ENCODE measurements at regions of chr6 and their contacts with region 1.

Region 1: DNA sequence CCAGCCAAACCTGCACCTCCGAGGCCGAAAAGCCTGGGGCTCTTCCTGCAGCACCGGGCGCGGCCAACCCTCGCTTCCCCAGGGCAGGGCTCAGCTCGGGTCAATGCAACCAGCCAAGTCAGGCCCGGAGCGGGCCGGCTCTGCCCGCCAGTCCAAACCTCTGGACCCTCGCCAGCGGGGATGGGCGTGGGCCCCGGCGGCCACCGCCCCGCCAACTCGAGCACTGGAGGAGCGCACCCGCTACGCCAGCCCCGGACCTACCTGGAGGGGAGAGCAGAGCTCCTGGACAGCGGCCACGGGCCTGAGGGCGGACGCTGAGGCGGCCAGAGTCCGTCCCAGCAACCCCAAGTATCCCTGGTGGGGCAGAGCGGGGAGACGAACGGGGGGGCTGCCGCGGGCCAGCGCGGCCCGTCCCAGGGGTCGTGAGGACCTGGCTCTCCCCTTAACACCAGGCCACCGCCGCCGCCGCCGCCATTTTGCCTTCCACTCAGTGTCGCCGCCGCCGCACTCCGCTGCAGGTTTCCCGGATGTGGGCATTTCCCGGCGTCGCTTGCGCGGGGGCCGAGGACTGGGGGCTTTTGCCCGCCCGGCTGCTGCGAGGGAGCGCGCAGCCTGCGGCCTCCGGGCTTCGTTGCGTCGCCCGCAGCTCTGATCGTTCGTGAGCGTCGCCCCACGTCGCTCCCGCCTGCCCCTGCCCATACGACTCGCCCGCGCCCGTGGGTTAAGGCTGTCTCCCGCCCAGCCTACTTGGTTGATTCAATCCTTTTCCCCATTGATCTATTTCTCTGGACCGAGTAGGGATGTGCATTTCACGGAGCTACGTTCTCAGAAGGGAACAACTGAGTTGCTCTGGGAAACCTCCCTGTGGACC is at the start of gene LATS1:
- DNase-seq: peak; percentile 83 to 94 (median 91)
- ATAC-seq: peak; percentile 94
- H3K4me3 Mint-ChIP-seq: peak within 1 kb of the TSS; percentile 86 to 98 (median 93)
- H3K27ac Mint-ChIP-seq: peak within 1 kb of the TSS; percentile 95 to 98 (median 97)
- H3K4me1 Mint-ChIP-seq: peaks cover 12 to 51% (median 36%) of the 10 kb centered on the region in 4 donors
- H3K27me3 Mint-ChIP-seq: no peaks in the 10 kb centered on the region
- polyA plus RNA-seq, gene LATS1: 6.8 to 14.2 (median 14.1) TPM

Region 2: DNA sequence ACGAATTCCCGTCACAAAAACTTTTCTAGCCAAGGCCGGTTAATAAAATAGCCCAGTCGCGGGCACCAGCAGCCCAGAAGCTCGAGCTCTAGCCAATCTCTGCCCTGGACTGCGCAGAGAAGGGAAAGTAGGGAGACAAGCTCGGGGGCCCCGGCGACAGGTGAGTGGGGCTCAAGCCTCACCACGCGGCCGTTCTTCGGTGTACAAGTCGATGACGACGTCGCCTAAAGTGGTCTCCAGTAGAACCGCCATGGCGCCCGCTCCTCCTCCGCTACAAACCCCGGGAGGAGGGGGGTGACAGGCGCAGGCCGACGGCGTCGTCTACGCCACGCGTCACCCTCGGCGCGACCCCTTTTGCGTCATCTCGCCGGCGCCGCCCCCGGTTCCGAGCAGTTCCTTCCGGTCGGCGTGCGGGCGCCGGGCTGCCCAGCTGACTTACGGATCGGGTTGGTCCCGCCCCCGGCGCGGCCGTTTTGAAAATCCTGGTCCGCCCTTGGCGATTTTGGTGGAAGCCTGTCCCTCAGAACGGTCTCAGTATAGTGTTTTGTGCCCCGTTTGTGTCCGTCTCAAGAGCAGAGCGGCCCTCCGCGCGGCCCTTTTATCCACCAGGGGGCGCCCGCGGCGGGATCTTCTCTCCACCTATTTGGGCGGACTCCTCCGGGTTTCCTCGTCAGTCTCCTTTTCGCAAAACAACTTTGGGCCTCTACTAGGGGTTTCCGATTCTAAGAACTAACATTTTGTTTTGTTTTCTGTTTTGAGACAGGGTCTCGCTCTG is 171.9 kb before region 1 on chr6 and contains the start of gene PPIL4:
- POLR2A ChIA-PET with region 1: interaction called, 26 read pairs
- DNase-seq: peak; percentile 93 to 98 (median 97)
- ATAC-seq: peak; percentile 83 to 85
- H3K4me3 Mint-ChIP-seq: peak within 1 kb of the TSS; percentile 79 to 100 (median 99)
- H3K27ac Mint-ChIP-seq: peak within 1 kb of the TSS; percentile 97 to 100 (median 100)
- H3K4me1 Mint-ChIP-seq: peaks cover 22 to 45% (median 39%) of the 10 kb centered on the region in 4 donors
- H3K27me3 Mint-ChIP-seq: peaks cover 0 to 4% (median 0%) of the 10 kb centered on the region in 5 donors
- polyA plus RNA-seq, gene PPIL4: 7.1 to 11.8 (median 11.8) TPM

Region 3: GRCh38 chr6:149565527-149566409 is 152.1 kb before region 1 on chr6 and contains the start of gene GINM1:
- POLR2A ChIA-PET with region 1: interaction called, 13 read pairs
- DNase-seq: peak; percentile 92 to 96 (median 96)
- ATAC-seq: peak; percentile 80 to 83
- H3K4me3 Mint-ChIP-seq: peak within 1 kb of the TSS; percentile 90 to 99 (median 97)
- H3K27ac Mint-ChIP-seq: peak within 1 kb of the TSS; percentile 93 to 98 (median 96)
- H3K4me1 Mint-ChIP-seq: peaks cover 3 to 25% (median 19%) of the 10 kb centered on the region in 4 donors
- H3K27me3 Mint-ChIP-seq: peaks cover 0 to under 1% (median 0%) of the 10 kb centered on the region in 5 donors
- polyA plus RNA-seq, gene GINM1: 15.9 to 20.7 (median 20.1) TPM

Region 4: GRCh38 chr6:149636116-149636515 is 81.7 kb before region 1 on chr6:
- POLR2A ChIA-PET with region 1: no interaction called
- DNase-seq: no peak
- ATAC-seq: no peak
- H3K4me3 Mint-ChIP-seq: no peak overlapping the region
- H3K27ac Mint-ChIP-seq: no peak overlapping the region
- H3K4me1 Mint-ChIP-seq: peaks cover 0 to 4% (median 3%) of the 10 kb centered on the region in 4 donors
- H3K27me3 Mint-ChIP-seq: no peaks in the 10 kb centered on the region

Region 5: GRCh38 chr6:149746147-149746946 is 28.5 kb after region 1 on chr6 and contains the start of gene NUP43:
- POLR2A ChIA-PET with region 1: interaction called, 66 read pairs
- DNase-seq: peak; percentile 78 to 97 (median 91)
- ATAC-seq: peak; percentile 66 to 74
- H3K4me3 Mint-ChIP-seq: peak within 1 kb of the TSS; percentile 93 to 98 (median 96)
- H3K27ac Mint-ChIP-seq: peak within 1 kb of the TSS; percentile 82 to 96 (median 92)
- H3K4me1 Mint-ChIP-seq: peaks cover 10 to 43% (median 34%) of the 10 kb centered on the region in 4 donors
- H3K27me3 Mint-ChIP-seq: no peaks in the 10 kb centered on the region
- polyA plus RNA-seq, gene NUP43: 2.4 to 6.3 (median 5.9) TPM

Measured in naive thymus-derived CD8-positive, alpha-beta T cell (primary cell).